HEK293T (cell line): ENCODE measurements at regions of chr11 and their contacts with region 1.

Region 1: GRCh38 chr11:75562048-75562835 is at the start of gene SERPINH1:
- DNase-seq: peak; percentile 86

Region 2: GRCh38 chr11:75577207-75577606 is 15.0 kb after region 1 on chr11:
- CTCF ChIA-PET with region 1: interaction called, 5 read pairs
- POLR2A ChIA-PET with region 1: interaction called, 50 read pairs
- DNase-seq: peak; percentile 79

Region 3: DNA sequence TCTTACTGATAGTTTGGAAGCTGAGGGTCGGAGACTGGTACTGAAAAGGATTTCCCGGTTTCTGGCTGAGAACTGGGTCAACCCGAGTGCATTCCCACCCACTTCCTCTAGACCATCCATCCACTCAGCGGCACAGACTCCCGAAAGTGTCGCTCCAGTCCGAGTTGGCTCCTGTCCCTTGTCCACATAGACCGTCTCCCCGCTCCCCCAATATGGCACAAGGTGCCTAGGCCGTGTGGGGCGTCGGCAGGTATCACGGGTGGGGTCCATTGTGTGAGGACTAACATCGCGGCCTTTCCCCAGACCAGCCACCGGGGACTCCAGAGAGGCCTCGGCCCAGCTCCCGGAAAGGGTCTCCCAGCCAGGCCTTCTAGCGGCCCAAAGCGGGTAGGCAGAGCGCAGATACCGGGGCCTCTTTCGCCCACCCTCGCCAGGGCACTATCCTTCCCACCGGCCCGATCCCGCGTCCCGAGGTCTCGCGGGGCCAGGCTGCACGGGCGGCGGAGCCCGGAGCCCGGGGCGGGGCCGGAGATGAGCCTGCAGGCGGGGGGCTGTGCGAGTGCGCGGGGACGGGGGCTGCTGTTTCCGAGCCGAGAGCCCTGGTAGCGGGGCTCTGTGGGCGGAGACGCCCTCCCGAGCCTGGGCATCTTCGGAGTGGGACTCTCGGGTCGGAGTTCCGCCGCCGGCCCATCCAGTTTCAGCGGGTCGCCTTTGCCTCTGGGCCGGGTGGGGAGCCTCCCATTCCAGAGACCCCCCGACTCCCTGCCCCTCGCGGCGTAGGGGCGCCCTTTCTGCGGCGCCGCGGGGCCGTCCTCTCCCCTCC is 20.9 kb after region 1 on chr11:
- CTCF ChIA-PET with region 1: interaction called, 4 read pairs
- POLR2A ChIA-PET with region 1: interaction called, 21 read pairs
- DNase-seq: peak; percentile 80

Region 4: GRCh38 chr11:75689863-75690609 is 127.8 kb after region 1 on chr11:
- CTCF ChIA-PET with region 1: no interaction called
- POLR2A ChIA-PET with region 1: no interaction called
- DNase-seq: no peak

Region 5: GRCh38 chr11:76120513-76121101 is 558.4 kb after region 1 on chr11:
- CTCF ChIA-PET with region 1: no interaction called
- POLR2A ChIA-PET with region 1: no interaction called
- DNase-seq: no peak